SK-N-SH (cell line): ENCODE measurements at regions of chr5 and their contacts with region 1.

Region 1: GRCh38 chr5:138503487-138504270 is 38.4 kb downstream of the EGR1 start:
- DNase-seq: peak; percentile 70
- H3K4me3 ChIP-seq: no peak overlapping the region
- H3K27ac ChIP-seq: peak overlapping the region in 1 of 2 experiments; percentile 30; a peak in 1 of 4 replicates
- H3K4me1 ChIP-seq: peaks cover 0 to 6% of the 10 kb centered on the region in 2 experiments; a peak in 1 of 4 replicates
- H3K27me3 ChIP-seq: no peaks in the 10 kb centered on the region
- CTCF ChIP-seq: peak; percentile 80
- EP300 ChIP-seq: no peak
- RAD21 ChIP-seq: peak; percentile 90

Region 2: GRCh38 chr5:138449501-138450239 is 54.0 kb before region 1 on chr5:
- CTCF ChIA-PET with region 1: interaction called, 167 read pairs
- POLR2A ChIA-PET with region 1: interaction called, 20 read pairs
- DNase-seq: peak; percentile 96
- H3K4me3 ChIP-seq: peak overlapping the region in 1 of 2 experiments; percentile 34; a peak in 1 of 4 replicates
- H3K27ac ChIP-seq: peak overlapping the region in 1 of 2 experiments; percentile 8; a peak in 1 of 4 replicates
- H3K4me1 ChIP-seq: peaks cover 13 to 19% of the 10 kb centered on the region in 2 experiments; a peak in 3 of 4 replicates
- H3K27me3 ChIP-seq: no peaks in the 10 kb centered on the region
- CTCF ChIP-seq: peak; percentile 91
- EP300 ChIP-seq: no peak
- RAD21 ChIP-seq: peak; percentile 89

Region 3: GRCh38 chr5:138464008-138464387 is 39.7 kb before region 1 on chr5:
- CTCF ChIA-PET with region 1: interaction called, 196 read pairs
- POLR2A ChIA-PET with region 1: interaction called, 22 read pairs
- DNase-seq: peak; percentile 95
- H3K4me3 ChIP-seq: peak overlapping the region; percentile 81 to 83
- H3K27ac ChIP-seq: peak overlapping the region; percentile 96 to 99
- H3K4me1 ChIP-seq: peaks cover 9 to 19% of the 10 kb centered on the region in 2 experiments; a peak in 1 of 4 replicates
- H3K27me3 ChIP-seq: no peaks in the 10 kb centered on the region
- CTCF ChIP-seq: peak; percentile 85
- EP300 ChIP-seq: no peak
- RAD21 ChIP-seq: peak; percentile 64

Region 4: GRCh38 chr5:138515556-138516245 is 12.0 kb after region 1 on chr5:
- CTCF ChIA-PET with region 1: interaction called, 27 read pairs
- POLR2A ChIA-PET with region 1: no interaction called
- DNase-seq: no peak
- H3K4me3 ChIP-seq: no peak overlapping the region
- H3K27ac ChIP-seq: no peak overlapping the region
- H3K4me1 ChIP-seq: no peaks in the 10 kb centered on the region
- H3K27me3 ChIP-seq: no peaks in the 10 kb centered on the region
- CTCF ChIP-seq: no peak
- EP300 ChIP-seq: no peak
- RAD21 ChIP-seq: no peak

Region 5: GRCh38 chr5:138542956-138543729 is 39.5 kb after region 1 on chr5 and contains the start of gene ETF1:
- CTCF ChIA-PET with region 1: interaction called, 15 read pairs
- POLR2A ChIA-PET with region 1: no interaction called
- DNase-seq: peak; percentile 97
- H3K4me3 ChIP-seq: peak within 1 kb of the TSS; percentile 88 to 91
- H3K27ac ChIP-seq: peak within 1 kb of the TSS; percentile 96 to 97
- H3K4me1 ChIP-seq: peaks cover 18 to 25% of the 10 kb centered on the region in 2 experiments
- H3K27me3 ChIP-seq: no peaks in the 10 kb centered on the region
- CTCF ChIP-seq: no peak
- EP300 ChIP-seq: peak in 1 of 2 experiments; percentile 28; a peak in 1 of 4 replicates
- RAD21 ChIP-seq: no peak
- polyA plus RNA-seq, gene ETF1: 36.7 and 48.7 TPM in 2 replicates